Posterior vena cava (tissue), 2 donors: ENCODE measurements at regions of chr20 and their contacts with region 1.

Region 1: GRCh38 chr20:39004508-39004907 is 42.4 kb downstream of the DHX35 start:
- DNase-seq: no peak

Region 2: GRCh38 chr20:37990571-37991151 is 1013.8 kb before region 1 on chr20:
- intact Hi-C with region 1: no loop called
- DNase-seq: no peak

Region 3: DNA sequence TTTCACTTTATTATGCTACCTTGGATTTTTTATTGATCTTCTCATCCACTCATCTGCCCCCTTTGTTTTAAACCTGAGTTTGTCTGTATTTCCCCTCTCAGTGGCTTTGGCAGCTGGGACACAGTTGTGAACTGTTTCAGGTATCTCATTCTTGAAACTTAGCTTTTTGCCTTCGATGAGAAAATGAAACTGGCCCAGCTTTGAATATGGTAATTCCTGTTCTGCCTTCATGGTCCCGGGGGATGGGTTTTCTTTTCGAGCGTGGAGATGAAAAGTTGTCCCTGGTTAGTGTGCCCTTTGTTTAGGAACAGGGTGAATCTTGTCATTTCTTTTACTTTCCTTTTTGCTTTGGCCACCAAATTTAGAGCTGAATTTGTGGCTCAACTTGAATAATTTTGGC is 16.7 kb before region 1 on chr20:
- intact Hi-C with region 1: no loop called
- DNase-seq: no peak

Region 4: DNA sequence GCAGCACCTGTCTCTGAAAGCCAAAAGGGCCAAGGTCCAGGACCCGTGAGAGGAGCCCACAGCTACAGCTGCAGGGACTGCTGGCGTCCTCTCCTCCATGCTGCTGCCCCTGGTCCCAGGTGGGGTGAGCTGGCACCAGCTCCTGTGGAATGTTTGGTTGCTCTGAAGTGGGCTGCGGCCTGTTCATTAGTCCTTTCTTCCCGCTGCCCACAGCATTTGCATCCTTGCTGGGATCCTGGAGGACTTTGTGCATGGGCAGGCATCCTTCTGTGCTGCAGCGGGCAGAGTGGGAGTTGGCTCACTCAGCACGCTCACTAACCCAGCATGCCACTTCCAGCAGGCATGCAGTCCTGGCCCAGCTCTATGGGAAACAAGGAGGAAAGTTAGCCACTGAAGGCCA is 34.0 kb after region 1 on chr20:
- intact Hi-C with region 1: loop called in 1 of 2 experiments (anchors 1 kb)
- DNase-seq: no peak